ENCODE measurements at regions of chr18 and their contacts with region 1.

Region 1: GRCh38 chr18:74476140-74476539 is 19.0 kb upstream of the DIPK1C start:
- DNase-seq: peak in 1 of 2 experiments; percentile 82
- H3K4me3 ChIP-seq: no peak overlapping the region
- H3K27ac ChIP-seq: no peak overlapping the region
- H3K4me1 ChIP-seq: no peaks in the 10 kb centered on the region; a peak in 1 of 7 replicates
- H3K27me3 ChIP-seq: peaks cover 0 to 1% (median 0%) of the 10 kb centered on the region in 4 experiments; a peak in 1 of 7 replicates
- CTCF ChIP-seq: peak; percentile 63 to 74 (median 72)
- EP300 ChIP-seq: no peak
- POLR2A ChIP-seq: no peak
- RAD21 ChIP-seq: peak; percentile 70 to 77

Region 2: DNA sequence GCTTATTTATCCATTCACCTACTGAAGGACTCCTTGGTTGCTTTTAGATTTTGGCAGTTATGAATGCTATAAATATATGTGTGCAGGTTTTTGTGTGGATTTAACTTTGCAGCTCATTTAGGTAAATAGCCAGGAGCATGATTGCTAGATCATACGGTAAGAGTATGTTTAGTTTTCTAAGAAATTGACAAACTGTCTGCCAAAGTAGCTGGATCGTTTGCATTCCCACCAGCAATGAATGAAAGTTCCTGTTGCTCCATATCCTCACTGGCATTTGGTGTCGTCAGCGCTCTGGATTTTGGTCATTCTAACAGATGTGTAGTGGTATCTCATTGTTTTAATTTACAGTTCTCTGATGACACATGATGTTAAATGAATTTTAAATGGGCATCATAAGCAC is 10.4 kb before region 1 on chr18:
- CTCF ChIA-PET with region 1: interaction called, 12 read pairs
- POLR2A ChIA-PET with region 1: no interaction called
- DNase-seq: no peak
- H3K4me3 ChIP-seq: no peak overlapping the region
- H3K27ac ChIP-seq: no peak overlapping the region
- H3K4me1 ChIP-seq: no peaks in the 10 kb centered on the region
- H3K27me3 ChIP-seq: no peaks in the 10 kb centered on the region
- CTCF ChIP-seq: no peak
- EP300 ChIP-seq: no peak
- POLR2A ChIP-seq: no peak
- RAD21 ChIP-seq: no peak

Region 3: GRCh38 chr18:74489676-74490075 is 13.5 kb after region 1 on chr18:
- CTCF ChIA-PET with region 1: interaction called, 19 read pairs
- POLR2A ChIA-PET with region 1: interaction called, 3 read pairs
- DNase-seq: no peak
- H3K4me3 ChIP-seq: no peak overlapping the region
- H3K27ac ChIP-seq: no peak overlapping the region
- H3K4me1 ChIP-seq: peaks cover 0 to 3% (median 0%) of the 10 kb centered on the region in 4 experiments; a peak in 1 of 7 replicates
- H3K27me3 ChIP-seq: no peaks in the 10 kb centered on the region
- CTCF ChIP-seq: no peak
- EP300 ChIP-seq: no peak
- POLR2A ChIP-seq: no peak
- RAD21 ChIP-seq: no peak

Region 4: GRCh38 chr18:74582642-74583041 is 106.5 kb after region 1 on chr18:
- CTCF ChIA-PET with region 1: no interaction called
- POLR2A ChIA-PET with region 1: no interaction called
- DNase-seq: no peak
- H3K4me3 ChIP-seq: no peak overlapping the region
- H3K27ac ChIP-seq: no peak overlapping the region
- H3K4me1 ChIP-seq: peaks cover 0 to 4% (median 3%) of the 10 kb centered on the region in 4 experiments; a peak in 3 of 7 replicates
- H3K27me3 ChIP-seq: no peaks in the 10 kb centered on the region; a peak in 1 of 7 replicates
- CTCF ChIP-seq: no peak
- EP300 ChIP-seq: no peak
- POLR2A ChIP-seq: no peak
- RAD21 ChIP-seq: no peak